GM12878 (cell line): ENCODE measurements at regions of chr14 and their contacts with region 1.

Region 1: DNA sequence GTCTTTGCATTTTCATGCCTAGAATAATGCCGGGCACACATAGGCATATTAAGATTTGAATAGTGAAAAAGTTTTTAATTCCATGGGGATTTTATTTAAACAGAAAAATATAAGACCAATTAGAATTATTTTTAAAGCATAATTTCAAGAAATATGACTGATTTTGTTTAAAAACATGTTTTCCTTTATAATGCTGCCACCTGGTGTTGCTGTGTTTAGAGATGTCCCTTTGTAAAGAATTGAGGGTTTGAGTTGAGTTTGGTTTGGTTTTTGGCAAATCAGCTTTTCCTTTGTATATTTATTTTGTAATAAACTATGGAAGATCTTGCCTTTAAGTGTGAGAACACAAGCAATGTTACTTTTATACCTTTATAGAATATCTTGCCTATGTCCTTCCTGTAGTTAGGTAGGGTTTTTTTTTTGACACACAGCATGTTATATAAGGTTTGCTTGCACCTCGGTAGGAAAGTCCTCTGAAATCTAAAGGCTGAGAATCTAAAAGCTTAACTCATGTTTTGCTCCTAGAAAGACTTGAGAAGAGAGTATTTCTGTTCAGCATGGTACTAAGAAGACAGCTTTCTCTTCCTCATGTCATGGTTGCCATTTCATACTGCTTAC is 31.4 kb upstream of the SNAPC1 start:
- DNase-seq: no peak
- ATAC-seq: 0 out of 3 replicates have a peak, but pooled peaks have one; percentile 25
- H3K4me3 ChIP-seq: no peak overlapping the region
- H3K27ac ChIP-seq: no peak overlapping the region
- H3K4me1 ChIP-seq: no peaks in the 10 kb centered on the region
- H3K27me3 ChIP-seq: no peaks in the 10 kb centered on the region
- CTCF ChIP-seq: peak in 1 of 3 experiments; percentile 25; a peak in 2 of 6 replicates
- EP300 ChIP-seq: no peak
- POLR2A ChIP-seq: no peak
- RAD21 ChIP-seq: peak; percentile 62

Region 2: DNA sequence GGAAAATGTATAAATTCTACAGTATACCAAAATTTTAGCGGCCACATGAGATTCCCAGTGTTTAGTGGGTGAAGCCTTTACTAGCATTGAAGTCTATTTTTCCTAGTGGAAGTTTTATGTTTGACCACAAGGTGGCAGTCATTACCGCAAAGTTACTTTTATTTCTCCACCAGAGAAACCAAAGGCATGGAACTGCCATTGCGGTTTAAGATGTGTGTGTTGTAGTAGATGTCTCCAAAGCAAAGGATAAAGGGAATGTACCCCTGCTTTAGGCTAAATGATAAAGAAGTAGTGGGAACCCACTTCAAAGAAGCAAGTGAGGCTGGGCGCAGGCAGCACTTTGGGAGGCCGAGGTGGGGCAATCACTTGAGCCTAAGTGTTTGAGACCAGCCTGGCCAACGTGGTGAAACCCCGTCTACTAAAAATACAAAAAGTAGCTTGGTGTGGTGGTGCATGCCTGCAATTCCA is 269.0 kb before region 1 on chr14:
- CTCF ChIA-PET with region 1: interaction called, 7 read pairs
- POLR2A ChIA-PET with region 1: no interaction called
- RAD21 ChIA-PET with region 1: interaction called, 3 read pairs
- SMC1A ChIA-PET with region 1: interaction called, 4 read pairs
- in situ Hi-C with region 1: loop called (anchors 5 kb)
- intact Hi-C with region 1: loop called (anchors 5 kb)
- DNase-seq: no peak
- ATAC-seq: peak; percentile 70
- H3K4me3 ChIP-seq: no peak overlapping the region
- H3K27ac ChIP-seq: no peak overlapping the region
- H3K4me1 ChIP-seq: no peaks in the 10 kb centered on the region
- H3K27me3 ChIP-seq: no peaks in the 10 kb centered on the region
- CTCF ChIP-seq: peak; percentile 42 to 67 (median 57); a peak in 5 of 6 replicates
- EP300 ChIP-seq: no peak
- POLR2A ChIP-seq: no peak
- RAD21 ChIP-seq: peak; percentile 76

Region 3: GRCh38 chr14:61568572-61569131 is 162.2 kb before region 1 on chr14:
- CTCF ChIA-PET with region 1: no interaction called
- POLR2A ChIA-PET with region 1: no interaction called
- RAD21 ChIA-PET with region 1: no interaction called
- SMC1A ChIA-PET with region 1: no interaction called
- in situ Hi-C with region 1: no loop called
- intact Hi-C with region 1: no loop called
- DNase-seq: peak; percentile 52
- ATAC-seq: peak; percentile 92
- H3K4me3 ChIP-seq: peak overlapping the region; percentile 66
- H3K27ac ChIP-seq: no peak overlapping the region
- H3K4me1 ChIP-seq: peaks cover 21% of the 10 kb centered on the region
- H3K27me3 ChIP-seq: no peaks in the 10 kb centered on the region
- CTCF ChIP-seq: no peak
- EP300 ChIP-seq: no peak
- POLR2A ChIP-seq: peak; percentile 65
- RAD21 ChIP-seq: no peak

Region 4: GRCh38 chr14:61719344-61720293 is 11.2 kb before region 1 on chr14:
- CTCF ChIA-PET with region 1: interaction called, 25 read pairs
- POLR2A ChIA-PET with region 1: interaction called, 8 read pairs
- RAD21 ChIA-PET with region 1: interaction called, 6 read pairs
- SMC1A ChIA-PET with region 1: interaction called, 25 read pairs
- in situ Hi-C with region 1: no loop called
- intact Hi-C with region 1: no loop called
- DNase-seq: no peak
- ATAC-seq: peak; percentile 48
- H3K4me3 ChIP-seq: no peak overlapping the region; the same call in 1 of the 2 replicates
- H3K27ac ChIP-seq: peak overlapping the region; percentile 15; the same call in 1 of the 2 replicates
- H3K4me1 ChIP-seq: peaks cover 20% of the 10 kb centered on the region
- H3K27me3 ChIP-seq: no peaks in the 10 kb centered on the region
- CTCF ChIP-seq: no peak
- EP300 ChIP-seq: no peak
- POLR2A ChIP-seq: no peak
- RAD21 ChIP-seq: no peak

Region 5: DNA sequence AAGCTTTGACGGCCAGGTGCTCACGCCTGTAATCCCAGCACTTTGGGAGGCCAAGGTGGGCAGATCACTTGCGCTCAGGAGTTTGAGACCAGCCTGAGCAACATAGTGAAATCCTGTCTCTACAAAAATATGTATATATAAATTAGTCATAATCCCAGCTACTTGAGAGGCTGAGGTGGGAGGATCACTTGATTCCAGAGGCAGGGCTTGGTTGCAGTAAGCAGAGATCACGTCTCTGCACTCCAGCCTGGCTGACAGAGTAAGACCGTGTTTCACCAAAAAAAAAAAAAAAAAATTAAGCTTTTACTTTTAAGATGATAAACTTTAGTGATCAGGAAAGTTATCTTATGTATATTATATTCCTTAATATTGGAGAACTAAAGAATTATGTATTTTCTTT is 13.4 kb after region 1 on chr14:
- CTCF ChIA-PET with region 1: interaction called, 10 read pairs
- POLR2A ChIA-PET with region 1: interaction called, 5 read pairs
- RAD21 ChIA-PET with region 1: interaction called, 8 read pairs
- SMC1A ChIA-PET with region 1: interaction called, 21 read pairs
- in situ Hi-C with region 1: no loop called
- intact Hi-C with region 1: no loop called
- DNase-seq: no peak
- ATAC-seq: no peak
- H3K4me3 ChIP-seq: no peak overlapping the region
- H3K27ac ChIP-seq: no peak overlapping the region
- H3K4me1 ChIP-seq: peaks cover 5% of the 10 kb centered on the region
- H3K27me3 ChIP-seq: no peaks in the 10 kb centered on the region
- CTCF ChIP-seq: no peak
- EP300 ChIP-seq: no peak
- POLR2A ChIP-seq: no peak
- RAD21 ChIP-seq: no peak

Region 6: DNA sequence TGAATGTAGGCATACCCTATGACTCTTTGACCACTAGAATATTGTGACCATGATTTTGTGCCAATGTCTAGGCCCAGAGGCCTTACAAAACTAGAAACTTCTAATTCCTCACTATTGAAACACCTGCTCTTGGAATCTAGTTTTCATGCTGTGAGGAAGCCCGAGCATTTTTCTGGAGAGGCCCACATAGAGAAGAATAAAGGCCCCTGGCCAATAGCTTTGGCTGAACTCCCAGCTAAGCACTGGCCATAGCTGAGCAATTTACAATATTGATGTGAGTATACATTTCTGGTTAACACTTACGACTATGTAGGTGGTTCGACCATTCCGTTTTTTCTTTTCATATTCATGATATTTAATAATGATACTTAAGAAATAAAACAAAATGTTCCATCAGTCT is 1124.1 kb after region 1 on chr14:
- CTCF ChIA-PET with region 1: no interaction called
- POLR2A ChIA-PET with region 1: no interaction called
- RAD21 ChIA-PET with region 1: no interaction called
- SMC1A ChIA-PET with region 1: no interaction called
- in situ Hi-C with region 1: no loop called
- intact Hi-C with region 1: no loop called
- DNase-seq: no peak
- ATAC-seq: no peak
- H3K4me3 ChIP-seq: no peak overlapping the region
- H3K27ac ChIP-seq: no peak overlapping the region
- H3K4me1 ChIP-seq: no peaks in the 10 kb centered on the region
- H3K27me3 ChIP-seq: no peaks in the 10 kb centered on the region
- CTCF ChIP-seq: no peak
- EP300 ChIP-seq: no peak
- POLR2A ChIP-seq: no peak
- RAD21 ChIP-seq: no peak